ENCODE measurements at regions of chr7 and their contacts with region 1.

Region 1: GRCh38 chr7:82729172-82730030 is 285.8 kb upstream of the CACNA2D1 start:
- DNase-seq: no peak
- H3K4me3 ChIP-seq: no peak overlapping the region
- H3K27me3 ChIP-seq: no peaks in the 10 kb centered on the region
- CTCF ChIP-seq: peak; percentile 76

Region 2: GRCh38 chr7:81482600-81483186 is 1246.7 kb before region 1 on chr7:
- CTCF ChIA-PET with region 1: interaction called, 22 read pairs
- POLR2A ChIA-PET with region 1: no interaction called
- DNase-seq: no peak
- H3K4me3 ChIP-seq: no peak overlapping the region
- H3K27me3 ChIP-seq: no peaks in the 10 kb centered on the region
- CTCF ChIP-seq: peak; percentile 47

Region 3: DNA sequence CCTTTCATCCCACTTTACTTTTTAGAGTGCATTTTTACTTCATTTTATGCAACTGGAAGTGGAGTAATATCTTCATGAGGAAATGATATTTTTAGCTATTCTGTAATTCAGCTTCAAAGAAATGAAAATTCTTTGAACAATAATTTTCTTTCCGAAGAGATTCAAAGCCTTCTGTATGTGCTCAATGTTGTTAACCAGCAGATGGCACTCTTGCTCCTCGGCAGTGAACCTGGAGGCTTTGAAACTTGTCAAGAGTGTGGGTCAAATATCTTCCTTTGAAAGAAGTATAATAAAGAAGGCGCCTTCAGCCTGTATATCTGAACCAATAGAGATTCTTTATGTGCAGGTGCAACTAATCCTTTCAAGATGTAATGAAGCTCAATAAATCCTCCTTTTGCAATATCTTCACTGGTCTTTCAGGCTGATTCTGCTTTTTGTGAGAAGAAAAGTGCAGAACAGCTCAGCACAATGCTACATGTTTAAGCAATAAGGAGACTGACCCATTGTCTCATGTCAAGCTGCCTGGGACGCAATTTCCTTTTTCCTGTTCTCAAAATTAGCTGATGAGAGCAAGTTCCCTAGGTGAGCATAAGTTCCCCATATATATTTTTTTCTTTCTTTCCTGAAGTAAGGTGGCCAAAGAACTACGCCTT is 1206.8 kb after region 1 on chr7:
- CTCF ChIA-PET with region 1: no interaction called
- POLR2A ChIA-PET with region 1: no interaction called
- DNase-seq: peak; percentile 17
- H3K4me3 ChIP-seq: no peak overlapping the region
- H3K27me3 ChIP-seq: no peaks in the 10 kb centered on the region
- CTCF ChIP-seq: peak; percentile 91

Measured in BJ (cell line).